Cardiac septum (tissue), 1 donor: ENCODE measurements at regions of chr2 and their contacts with region 1.

Region 1: GRCh38 chr2:214960677-214961076 is 151.2 kb upstream of the BARD1 start:
- DNase-seq: no peak

Region 2: DNA sequence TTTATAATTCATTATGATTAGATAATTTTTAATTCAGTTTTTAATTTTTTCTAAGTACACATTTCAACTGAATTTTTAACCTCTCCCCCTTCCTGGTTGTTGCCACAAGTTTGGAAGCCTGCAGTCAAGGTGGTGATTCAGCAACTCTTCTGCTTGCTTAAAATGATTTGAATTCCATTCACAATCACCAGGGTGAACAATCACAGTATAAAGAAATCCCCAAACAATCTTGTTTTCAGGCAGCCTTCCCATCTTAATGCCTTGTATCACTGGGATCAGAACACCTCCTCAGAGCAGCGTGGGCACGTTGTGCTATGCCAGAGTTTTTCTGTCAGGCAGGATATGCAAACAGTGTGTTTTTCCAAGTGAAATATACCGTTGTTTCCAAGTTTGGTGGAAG is 104.5 kb before region 1 on chr2:
- intact Hi-C with region 1: no loop called
- DNase-seq: no peak

Region 3: GRCh38 chr2:215052404-215052803 is 91.7 kb after region 1 on chr2:
- intact Hi-C with region 1: no loop called
- DNase-seq: no peak

Region 4: GRCh38 chr2:215238492-215239119 is 277.9 kb after region 1 on chr2:
- intact Hi-C with region 1: no loop called
- DNase-seq: no peak

Region 5: GRCh38 chr2:215269397-215270119 is 308.9 kb after region 1 on chr2:
- intact Hi-C with region 1: loop called (anchors 10 kb)
- DNase-seq: no peak

Region 6: DNA sequence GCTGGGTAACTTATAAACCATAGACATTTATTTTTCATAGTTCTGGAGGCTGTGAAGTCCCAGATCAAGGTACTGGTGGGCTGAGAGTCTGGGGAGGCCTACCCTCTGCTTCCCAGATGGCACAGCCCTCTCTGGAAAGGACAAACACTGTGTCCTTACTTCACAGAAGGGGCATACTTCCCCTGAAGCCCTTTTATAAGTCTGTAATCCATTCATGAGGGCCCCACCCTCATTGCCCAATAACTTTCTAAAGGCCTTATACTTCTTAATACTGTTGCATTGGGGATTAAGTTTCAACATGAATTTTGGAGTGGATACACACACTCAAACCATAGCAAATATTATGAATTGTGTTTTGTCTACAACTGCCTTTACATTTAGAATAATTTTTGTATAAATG is 387.2 kb after region 1 on chr2:
- intact Hi-C with region 1: no loop called
- DNase-seq: no peak